ENCODE measurements at regions of chr2 and their contacts with region 1.

Region 1: DNA sequence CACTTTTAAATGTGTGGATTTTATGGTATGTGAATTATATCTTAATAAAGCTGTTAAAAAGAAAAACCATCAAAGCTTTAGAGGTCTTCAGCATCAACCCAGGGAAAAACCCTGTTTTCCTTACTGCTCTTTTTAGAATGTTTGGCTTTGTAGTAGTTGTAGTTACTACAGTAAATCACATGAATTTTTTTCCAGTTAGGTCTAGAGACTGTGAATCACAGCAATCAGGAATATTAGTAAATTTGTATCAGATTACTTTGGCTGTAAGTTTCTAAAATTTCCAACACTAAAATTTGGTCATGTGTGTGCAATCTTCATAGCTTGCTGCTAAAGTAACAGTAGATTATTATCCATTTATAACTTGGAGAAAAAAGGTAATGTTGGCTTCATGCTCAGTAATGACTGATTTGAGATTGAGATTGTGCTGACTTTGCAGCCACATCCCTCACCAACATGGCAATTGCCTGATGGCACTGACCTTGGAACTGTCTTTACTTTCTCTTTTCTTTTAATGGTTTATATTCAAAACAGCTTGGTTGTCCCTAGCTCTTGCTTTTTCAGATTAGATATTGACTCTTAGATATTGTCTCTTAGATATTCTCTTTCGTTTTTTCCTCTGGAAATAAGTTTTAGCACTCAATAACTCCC is 41.1 kb downstream of the LCLAT1 start:
- DNase-seq: no peak
- ATAC-seq: no peak
- H3K4me3 ChIP-seq: no peak overlapping the region
- H3K4me3 Mint-ChIP-seq: no peak overlapping the region
- H3K27ac ChIP-seq: no peak overlapping the region
- H3K27ac Mint-ChIP-seq: no peak overlapping the region
- H3K4me1 ChIP-seq: peaks cover 2 to 6% of the 10 kb centered on the region in 2 experiments
- H3K4me1 Mint-ChIP-seq: peaks cover 41 to 51% (median 45%) of the 10 kb centered on the region in 3 donors
- H3K27me3 ChIP-seq: no peaks in the 10 kb centered on the region
- H3K27me3 Mint-ChIP-seq: no peaks in the 10 kb centered on the region

Region 2: DNA sequence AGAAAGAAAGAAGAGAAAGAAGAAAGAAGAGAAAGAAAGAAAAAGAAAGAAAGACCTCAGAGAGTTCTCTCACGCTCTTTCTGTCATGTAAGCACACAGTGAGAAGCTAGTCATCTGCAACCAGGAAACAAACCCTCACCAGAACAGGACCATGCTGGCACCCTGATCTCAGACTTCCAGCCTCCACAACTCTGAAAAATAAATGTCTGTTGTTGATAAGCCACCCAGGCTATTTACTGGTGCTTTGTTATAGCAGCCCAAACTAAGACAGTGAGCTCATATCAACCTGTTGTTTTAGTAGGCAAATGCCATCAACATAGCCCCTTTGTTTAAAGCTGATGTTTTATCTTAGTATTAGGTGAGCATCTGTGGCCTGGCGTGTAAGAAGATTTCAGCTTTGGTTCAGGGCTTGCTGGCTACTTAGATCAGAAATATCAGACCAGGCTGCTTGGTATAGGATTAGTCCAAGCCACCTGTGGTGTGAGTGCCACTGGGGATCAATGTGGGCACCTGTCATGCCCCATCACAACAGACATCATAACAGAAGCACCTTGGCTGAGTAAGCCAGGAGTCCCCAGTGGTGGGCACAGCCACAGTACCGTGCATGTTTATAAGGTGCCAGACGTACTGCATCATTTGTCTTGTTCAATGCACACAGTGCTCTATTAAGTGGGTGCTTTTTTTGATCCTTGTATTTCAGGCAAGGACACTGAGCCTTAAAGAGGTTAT is 162.4 kb before region 1 on chr2:
- CTCF ChIA-PET with region 1: interaction called in 1 of 2 experiments, 11 read pairs
- POLR2A ChIA-PET with region 1: no interaction called
- DNase-seq: no peak
- ATAC-seq: peak; percentile 51 to 68 (median 58)
- H3K4me3 ChIP-seq: no peak overlapping the region
- H3K4me3 Mint-ChIP-seq: no peak overlapping the region
- H3K27ac ChIP-seq: no peak overlapping the region
- H3K27ac Mint-ChIP-seq: peak overlapping the region; percentile 82 to 89
- H3K4me1 ChIP-seq: peaks cover 0 to 11% of the 10 kb centered on the region in 2 experiments
- H3K4me1 Mint-ChIP-seq: peaks cover 30 to 44% (median 33%) of the 10 kb centered on the region in 3 donors
- H3K27me3 ChIP-seq: no peaks in the 10 kb centered on the region
- H3K27me3 Mint-ChIP-seq: no peaks in the 10 kb centered on the region

Measured in T-cell (primary cell).